Activated T-helper 1 cell treated with anti-CD3 and anti-CD28 coated beads, Interleukin-12 subunit alpha, Interleukin-12 subunit beta, Interleukin-2, Interleukin-4 antibody, amounts not matched to agents 30 ng/mL and 10 ng/mL and 1 ng/mL, durations not matched to agents 14 hours and 24 hours and 36 hours (primary cell): ENCODE measurements at regions of chr21 and their contacts with region 1.

Region 1: DNA sequence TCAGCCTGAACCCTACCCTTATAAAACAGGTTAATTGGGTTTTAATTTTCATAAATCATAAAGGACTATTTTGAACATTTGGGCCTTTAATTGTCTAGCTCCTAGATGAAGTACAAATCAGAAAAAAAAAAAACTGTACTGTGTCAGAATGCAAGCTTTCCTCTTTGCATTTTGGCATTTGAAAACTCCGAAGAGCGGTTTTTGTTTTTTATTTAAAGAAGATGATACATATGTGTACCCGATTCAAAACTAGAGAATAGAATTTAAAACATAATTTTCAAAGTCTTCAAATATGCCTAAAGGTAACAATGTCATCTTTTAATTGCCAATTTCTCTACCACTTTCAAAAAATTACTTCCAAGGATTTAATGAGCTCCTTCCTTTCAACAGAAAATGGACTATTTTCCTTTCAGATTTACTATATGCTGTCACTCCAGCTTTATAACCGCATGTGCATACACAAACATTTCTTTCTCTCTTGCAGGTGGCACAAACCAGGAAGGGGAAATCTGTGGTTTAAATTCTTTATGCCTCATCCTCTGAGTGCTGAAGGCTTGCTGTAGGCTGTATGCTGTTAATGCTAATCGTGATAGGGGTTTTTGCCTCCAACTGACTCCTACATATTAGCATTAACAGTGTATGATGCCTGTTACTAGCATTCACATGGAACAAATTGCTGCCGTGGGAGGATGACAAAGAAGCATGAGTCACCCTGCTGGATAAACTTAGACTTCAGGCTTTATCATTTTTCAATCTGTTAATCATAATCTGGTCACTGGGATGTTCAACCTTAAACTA is 33.7 kb downstream of the MRPL39 start:
- DNase-seq: peak; percentile 42
- H3K4me3 Mint-ChIP-seq: peak overlapping the region; percentile 83
- H3K27ac Mint-ChIP-seq: peak overlapping the region; percentile 97
- H3K4me1 Mint-ChIP-seq: peaks cover 83% of the 10 kb centered on the region
- H3K27me3 Mint-ChIP-seq: no peaks in the 10 kb centered on the region

Region 2: DNA sequence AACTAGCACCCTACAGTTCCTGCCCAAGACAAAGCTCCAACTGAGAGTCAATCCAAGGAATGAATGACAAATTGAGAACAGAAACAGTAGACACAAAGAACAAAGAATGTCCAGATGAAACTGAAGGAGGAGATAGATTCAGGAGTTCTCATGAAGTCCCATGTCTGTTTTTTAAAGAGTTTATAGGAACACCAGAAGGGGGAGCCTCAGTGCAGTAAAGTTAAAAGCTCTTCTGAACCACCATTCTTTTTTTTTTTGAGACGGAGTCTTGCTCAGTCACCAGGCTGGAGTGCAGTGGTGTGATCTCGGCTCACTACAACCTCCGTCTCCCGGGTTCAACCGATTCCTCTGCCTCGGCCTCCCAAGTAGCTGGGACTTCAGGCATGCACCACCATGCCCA is 289.9 kb before region 1 on chr21:
- intact Hi-C with region 1: loop called (anchors 10 kb)
- DNase-seq: no peak
- H3K4me3 Mint-ChIP-seq: no peak overlapping the region
- H3K27ac Mint-ChIP-seq: no peak overlapping the region
- H3K4me1 Mint-ChIP-seq: no peaks in the 10 kb centered on the region
- H3K27me3 Mint-ChIP-seq: peaks cover 4% of the 10 kb centered on the region

Region 3: DNA sequence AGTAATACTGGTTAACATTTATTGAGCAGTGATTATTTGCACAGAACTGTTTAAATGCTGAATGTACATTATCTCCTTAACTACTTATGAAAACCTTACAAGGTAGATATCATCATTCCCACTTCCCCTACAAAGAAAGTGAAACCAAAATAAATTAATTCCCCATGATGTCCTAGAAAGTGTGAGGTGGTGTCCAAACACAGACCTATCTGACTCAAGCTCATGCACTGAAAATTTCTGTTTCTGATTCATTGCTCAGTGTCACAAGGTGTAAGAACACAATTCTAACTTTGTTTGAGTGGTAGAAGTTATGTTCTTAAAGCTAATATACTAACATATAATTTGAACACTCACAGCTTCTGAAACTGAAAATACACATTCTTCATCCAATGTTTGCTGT is 145.1 kb before region 1 on chr21:
- intact Hi-C with region 1: loop called (anchors 1 kb)
- DNase-seq: no peak
- H3K4me3 Mint-ChIP-seq: no peak overlapping the region
- H3K27ac Mint-ChIP-seq: peak overlapping the region; percentile 30
- H3K4me1 Mint-ChIP-seq: peaks cover 46% of the 10 kb centered on the region
- H3K27me3 Mint-ChIP-seq: no peaks in the 10 kb centered on the region

Region 4: DNA sequence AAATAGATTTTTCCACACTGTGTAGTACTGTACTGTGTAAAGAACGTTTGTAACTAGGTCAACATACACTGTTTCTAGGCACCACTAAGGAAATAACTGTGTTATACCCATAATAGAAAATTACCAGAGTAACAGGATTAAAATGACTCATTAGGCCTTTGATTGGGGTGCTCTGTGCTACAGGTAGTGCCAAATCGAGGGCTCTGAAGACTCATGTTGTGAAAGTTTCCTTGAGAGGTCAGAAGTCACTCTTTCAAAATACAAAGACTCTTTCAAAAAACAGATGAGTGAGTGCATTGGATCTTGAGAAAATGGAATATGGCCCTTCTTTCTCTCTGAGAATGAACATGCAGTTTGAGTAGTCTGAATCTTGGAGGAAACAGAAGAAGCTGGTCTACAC is 109.3 kb before region 1 on chr21:
- intact Hi-C with region 1: loop called (anchors 1 kb)
- DNase-seq: no peak
- H3K4me3 Mint-ChIP-seq: peak overlapping the region; percentile 58
- H3K27ac Mint-ChIP-seq: peak overlapping the region; percentile 90
- H3K4me1 Mint-ChIP-seq: peaks cover 62% of the 10 kb centered on the region
- H3K27me3 Mint-ChIP-seq: no peaks in the 10 kb centered on the region

Region 5: GRCh38 chr21:25501996-25502665 is 71.5 kb before region 1 on chr21:
- intact Hi-C with region 1: loop called (anchors 1 kb)
- DNase-seq: no peak
- H3K4me3 Mint-ChIP-seq: no peak overlapping the region
- H3K27ac Mint-ChIP-seq: peak overlapping the region; percentile 84
- H3K4me1 Mint-ChIP-seq: peaks cover 21% of the 10 kb centered on the region
- H3K27me3 Mint-ChIP-seq: no peaks in the 10 kb centered on the region

Region 6: GRCh38 chr21:25518491-25518911 is 55.1 kb before region 1 on chr21:
- intact Hi-C with region 1: no loop called
- DNase-seq: no peak
- H3K4me3 Mint-ChIP-seq: no peak overlapping the region
- H3K27ac Mint-ChIP-seq: no peak overlapping the region
- H3K4me1 Mint-ChIP-seq: peaks cover 17% of the 10 kb centered on the region
- H3K27me3 Mint-ChIP-seq: peaks cover 3% of the 10 kb centered on the region

Region 7: DNA sequence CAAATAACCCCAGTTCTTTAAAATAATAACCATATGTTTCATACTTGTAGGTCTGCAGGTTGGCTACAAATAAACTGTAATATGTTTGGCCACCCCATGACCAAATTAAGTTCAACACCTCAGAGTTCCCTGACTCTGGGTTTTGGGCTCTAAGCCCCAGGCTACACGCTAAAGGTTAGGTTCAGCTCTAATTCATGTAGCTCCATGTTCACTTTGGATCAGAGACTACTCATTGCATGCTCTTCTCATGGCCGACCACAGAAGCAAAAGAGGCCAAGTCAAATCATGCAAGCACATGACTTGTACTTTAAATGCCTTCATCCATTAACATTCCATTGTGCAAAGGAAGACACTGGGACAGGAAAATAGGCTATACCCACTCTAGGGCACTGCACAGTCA is 32.6 kb before region 1 on chr21:
- intact Hi-C with region 1: no loop called
- DNase-seq: no peak
- H3K4me3 Mint-ChIP-seq: no peak overlapping the region
- H3K27ac Mint-ChIP-seq: no peak overlapping the region
- H3K4me1 Mint-ChIP-seq: peaks cover 3% of the 10 kb centered on the region
- H3K27me3 Mint-ChIP-seq: peaks cover 1% of the 10 kb centered on the region

Region 8: DNA sequence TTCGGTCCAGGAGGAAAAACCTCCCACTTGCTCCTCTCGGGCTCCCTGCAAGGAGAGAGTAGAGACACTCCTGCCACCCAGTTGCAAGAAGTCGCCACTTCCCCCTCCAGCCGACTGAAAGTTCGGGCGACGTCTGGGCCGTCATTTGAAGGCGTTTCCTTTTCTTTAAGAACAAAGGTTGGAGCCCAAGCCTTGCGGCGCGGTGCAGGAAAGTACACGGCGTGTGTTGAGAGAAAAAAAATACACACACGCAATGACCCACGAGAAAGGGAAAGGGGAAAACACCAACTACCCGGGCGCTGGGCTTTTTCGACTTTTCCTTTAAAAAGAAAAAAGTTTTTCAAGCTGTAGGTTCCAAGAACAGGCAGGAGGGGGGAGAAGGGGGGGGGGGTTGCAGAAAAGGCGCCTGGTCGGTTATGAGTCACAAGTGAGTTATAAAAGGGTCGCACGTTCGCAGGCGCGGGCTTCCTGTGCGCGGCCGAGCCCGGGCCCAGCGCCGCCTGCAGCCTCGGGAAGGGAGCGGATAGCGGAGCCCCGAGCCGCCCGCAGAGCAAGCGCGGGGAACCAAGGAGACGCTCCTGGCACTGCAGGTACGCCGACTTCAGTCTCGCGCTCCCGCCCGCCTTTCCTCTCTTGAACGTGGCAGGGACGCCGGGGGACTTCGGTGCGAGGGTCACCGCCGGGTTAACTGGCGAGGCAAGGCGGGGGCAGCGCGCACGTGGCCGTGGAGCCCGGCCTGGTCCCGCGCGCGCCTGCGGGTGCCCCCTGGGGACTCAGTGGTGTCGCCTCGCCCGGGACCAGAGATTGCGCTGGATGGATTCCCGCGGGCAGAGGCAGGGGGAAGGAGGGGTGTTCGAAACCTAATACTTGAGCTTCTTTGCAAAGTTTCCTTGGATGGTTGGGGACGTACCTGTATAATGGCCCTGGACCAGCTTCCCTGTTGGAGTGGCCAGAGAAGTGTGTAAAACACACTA is 11.7 kb before region 1 on chr21:
- intact Hi-C with region 1: loop called (anchors 1 kb)
- DNase-seq: peak; percentile 68
- H3K4me3 Mint-ChIP-seq: peak overlapping the region; percentile 98
- H3K27ac Mint-ChIP-seq: peak overlapping the region; percentile 98
- H3K4me1 Mint-ChIP-seq: peaks cover 69% of the 10 kb centered on the region
- H3K27me3 Mint-ChIP-seq: no peaks in the 10 kb centered on the region